Vagina (tissue), 2 donors: ENCODE measurements at regions of chr9 and their contacts with region 1.

Region 1: GRCh38 chr9:28289746-28290145 is 716.5 kb upstream of the C9orf72 start:
- DNase-seq: no peak
- H3K4me3 ChIP-seq: no peak overlapping the region
- H3K27ac ChIP-seq: no peak overlapping the region
- H3K4me1 ChIP-seq: no peaks in the 10 kb centered on the region
- H3K27me3 ChIP-seq: no peaks in the 10 kb centered on the region
- CTCF ChIP-seq: no peak
- POLR2A ChIP-seq: no peak

Region 2: GRCh38 chr9:28086881-28087280 is 202.9 kb before region 1 on chr9:
- intact Hi-C with region 1: no loop called
- DNase-seq: no peak
- H3K4me3 ChIP-seq: no peak overlapping the region
- H3K27ac ChIP-seq: no peak overlapping the region
- H3K4me1 ChIP-seq: no peaks in the 10 kb centered on the region
- H3K27me3 ChIP-seq: no peaks in the 10 kb centered on the region
- CTCF ChIP-seq: no peak
- POLR2A ChIP-seq: no peak

Region 3: DNA sequence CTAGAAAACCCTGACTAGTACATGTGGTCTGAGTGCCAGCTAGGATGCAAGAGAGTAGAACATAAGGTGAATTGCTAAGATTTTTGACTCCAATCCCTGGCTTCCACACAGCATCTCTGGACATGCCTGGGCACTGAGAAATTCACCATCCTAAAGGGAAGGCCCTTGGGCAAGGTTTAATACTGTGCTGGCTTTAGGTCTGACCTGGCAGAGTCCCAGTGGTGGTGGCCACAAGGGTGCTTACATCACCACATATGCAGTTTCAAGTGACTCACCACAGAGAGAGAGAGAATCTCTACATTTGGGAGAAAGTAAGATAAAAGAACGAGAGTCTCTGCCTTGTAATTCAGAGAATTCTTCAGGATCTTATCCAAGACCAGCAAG is 54.9 kb before region 1 on chr9:
- intact Hi-C with region 1: no loop called
- DNase-seq: no peak
- H3K4me3 ChIP-seq: no peak overlapping the region
- H3K27ac ChIP-seq: no peak overlapping the region
- H3K4me1 ChIP-seq: no peaks in the 10 kb centered on the region
- H3K27me3 ChIP-seq: no peaks in the 10 kb centered on the region
- CTCF ChIP-seq: no peak
- POLR2A ChIP-seq: no peak

Region 4: GRCh38 chr9:28487561-28487960 is 197.8 kb after region 1 on chr9:
- intact Hi-C with region 1: loop called (anchors 10 kb)
- DNase-seq: no peak
- H3K4me3 ChIP-seq: no peak overlapping the region
- H3K27ac ChIP-seq: no peak overlapping the region
- H3K4me1 ChIP-seq: no peaks in the 10 kb centered on the region
- H3K27me3 ChIP-seq: no peaks in the 10 kb centered on the region
- CTCF ChIP-seq: no peak
- POLR2A ChIP-seq: no peak